ENCODE measurements at regions of chr10 and their contacts with region 1.

Region 1: GRCh38 chr10:93080350-93081046 is 6.8 kb downstream of the CYP26A1 start:
- DNase-seq: peak in 1 of 2 experiments; percentile 44
- H3K4me3 ChIP-seq: no peak overlapping the region
- H3K27ac ChIP-seq: no peak overlapping the region
- H3K4me1 ChIP-seq: no peaks in the 10 kb centered on the region; the same call in 1 of the 2 replicates
- H3K27me3 ChIP-seq: no peaks in the 10 kb centered on the region
- CTCF ChIP-seq: peak; percentile 85

Region 2: GRCh38 chr10:92822060-92822634 is 258.4 kb before region 1 on chr10:
- CTCF ChIA-PET with region 1: no interaction called
- POLR2A ChIA-PET with region 1: no interaction called
- intact Hi-C with region 1: no loop called
- DNase-seq: peak; percentile 4 to 81
- H3K4me3 ChIP-seq: no peak overlapping the region
- H3K27ac ChIP-seq: peak overlapping the region; percentile 96
- H3K4me1 ChIP-seq: peaks cover 16% of the 10 kb centered on the region
- H3K27me3 ChIP-seq: no peaks in the 10 kb centered on the region
- CTCF ChIP-seq: no peak

Region 3: DNA sequence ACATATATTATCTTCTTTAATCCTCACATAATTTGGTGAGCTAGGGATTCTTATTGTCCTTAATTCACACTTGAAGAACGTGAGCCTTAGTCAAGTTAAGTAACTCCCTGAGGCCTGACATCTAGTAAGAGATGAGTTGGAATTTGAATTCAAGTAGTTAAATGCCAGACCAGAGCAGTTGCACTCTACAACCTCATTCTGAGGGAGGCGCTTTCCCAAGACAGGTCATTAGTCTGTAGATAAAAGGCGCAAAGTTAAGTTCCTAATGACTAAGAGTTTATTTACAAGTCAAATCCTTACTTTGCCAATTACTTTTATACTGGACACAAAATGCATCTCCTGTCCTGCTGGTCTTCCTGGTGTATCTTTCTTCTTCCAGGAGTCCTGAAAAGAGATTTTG is 235.8 kb before region 1 on chr10:
- CTCF ChIA-PET with region 1: no interaction called
- POLR2A ChIA-PET with region 1: no interaction called
- intact Hi-C with region 1: no loop called
- DNase-seq: no peak
- H3K4me3 ChIP-seq: no peak overlapping the region
- H3K27ac ChIP-seq: no peak overlapping the region
- H3K4me1 ChIP-seq: peaks cover 13% of the 10 kb centered on the region
- H3K27me3 ChIP-seq: no peaks in the 10 kb centered on the region
- CTCF ChIP-seq: no peak

Region 4: DNA sequence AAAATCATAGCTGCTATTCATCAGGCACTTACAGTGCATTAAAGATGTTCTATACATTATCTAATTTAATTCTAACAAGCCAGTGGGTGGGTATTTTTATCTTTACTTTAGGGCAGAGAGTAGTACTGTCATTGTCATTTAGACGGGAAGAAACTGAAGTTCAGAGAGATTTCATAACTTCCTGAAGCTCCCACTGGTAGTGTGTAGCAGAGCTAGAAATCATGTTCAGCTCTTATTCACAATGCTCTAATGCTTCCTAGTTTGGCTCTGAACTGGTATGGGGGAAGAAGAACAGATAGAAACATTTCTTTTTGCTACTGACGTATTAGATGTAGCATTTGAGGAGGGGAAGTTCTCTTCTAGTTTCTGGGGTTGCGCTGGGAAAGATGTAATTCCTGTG is 109.9 kb after region 1 on chr10:
- CTCF ChIA-PET with region 1: interaction called, 14 read pairs
- POLR2A ChIA-PET with region 1: no interaction called
- intact Hi-C with region 1: no loop called
- DNase-seq: peak in 1 of 2 experiments; percentile 42
- H3K4me3 ChIP-seq: no peak overlapping the region
- H3K27ac ChIP-seq: peak overlapping the region; percentile 58
- H3K4me1 ChIP-seq: peaks cover 30% of the 10 kb centered on the region
- H3K27me3 ChIP-seq: no peaks in the 10 kb centered on the region
- CTCF ChIP-seq: no peak

Region 5: DNA sequence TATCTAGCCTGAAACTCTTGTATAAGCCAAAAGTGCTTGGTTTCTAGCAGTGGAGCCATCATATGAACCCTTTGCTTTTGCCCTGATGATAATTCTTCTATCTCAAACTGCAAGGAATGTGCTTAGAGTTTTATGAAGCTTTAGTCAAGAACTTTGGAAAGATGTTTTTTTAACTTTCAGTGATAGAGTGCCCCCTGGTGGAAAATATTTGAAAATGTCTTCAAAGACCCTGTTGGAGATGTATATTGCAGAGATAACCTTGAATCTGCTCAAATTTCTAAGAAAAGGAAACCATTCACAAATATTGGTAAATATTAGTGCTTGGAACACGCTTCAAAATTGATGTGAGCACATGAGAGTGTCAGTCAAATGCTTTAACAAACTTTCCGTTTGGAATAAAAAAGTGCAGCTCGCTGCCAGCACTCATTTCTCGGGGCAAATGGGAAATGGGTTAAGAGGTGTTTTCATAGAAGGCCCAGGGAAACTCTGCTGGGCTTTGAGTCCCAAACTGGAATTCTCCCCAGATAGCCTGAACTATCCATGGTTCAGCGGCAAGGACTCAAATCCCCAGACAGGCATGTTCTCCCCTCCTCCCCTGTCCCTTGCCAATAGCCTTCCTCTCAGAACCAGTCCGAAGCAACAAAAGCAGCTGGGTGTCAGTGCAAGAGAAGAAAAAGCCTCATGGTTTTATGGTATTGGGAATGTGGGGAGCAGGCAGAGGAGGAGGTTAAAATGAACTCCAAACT is 272.3 kb after region 1 on chr10:
- CTCF ChIA-PET with region 1: no interaction called
- POLR2A ChIA-PET with region 1: no interaction called
- intact Hi-C with region 1: loop called (anchors 5 kb)
- DNase-seq: no peak
- H3K4me3 ChIP-seq: no peak overlapping the region
- H3K27ac ChIP-seq: no peak overlapping the region
- H3K4me1 ChIP-seq: no peaks in the 10 kb centered on the region
- H3K27me3 ChIP-seq: no peaks in the 10 kb centered on the region
- CTCF ChIP-seq: peak; percentile 79